ENCODE measurements at regions of chr18 and their contacts with region 1.

Region 1: DNA sequence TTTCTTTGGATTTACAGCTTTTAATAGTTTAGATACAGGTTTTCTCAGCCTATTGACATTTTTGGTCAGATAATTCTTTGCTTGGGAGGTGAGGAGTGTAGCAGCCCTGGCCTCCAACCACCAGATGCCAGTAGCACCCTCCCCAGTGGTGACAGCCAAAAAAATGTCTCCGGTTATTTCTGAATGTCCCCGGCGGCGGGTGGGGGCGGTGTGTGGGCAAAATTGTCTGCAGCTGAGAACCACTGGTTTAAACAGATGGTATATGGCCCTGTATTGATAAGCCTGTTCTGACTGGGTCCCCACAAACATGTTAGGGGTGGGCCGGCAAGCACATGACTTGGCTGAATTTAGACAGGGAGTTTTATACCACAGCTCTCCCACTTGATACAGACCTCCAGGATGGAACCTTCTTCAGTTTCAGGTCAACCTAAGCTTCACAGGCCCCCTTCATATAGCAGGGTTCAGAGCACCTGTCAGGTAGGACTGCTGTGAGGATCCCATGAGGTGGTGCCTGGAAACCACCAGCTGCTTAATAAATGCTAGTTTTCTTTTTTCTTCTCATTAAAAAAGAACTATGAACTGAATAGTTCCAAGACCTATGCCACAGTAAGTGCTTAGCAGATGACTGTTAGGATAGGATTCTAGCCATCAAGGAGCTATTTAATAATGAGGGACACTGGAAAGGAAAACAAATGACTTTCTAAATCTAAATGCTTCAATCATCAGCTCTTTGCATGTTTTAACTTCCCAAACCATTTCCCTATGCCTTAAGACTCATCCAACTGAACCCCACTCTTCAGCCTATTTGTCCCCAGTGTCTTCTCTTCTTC is 18.1 kb downstream of the LPIN2 start:
- DNase-seq: peak; percentile 69
- H3K4me3 Mint-ChIP-seq: peak overlapping the region; percentile 43
- H3K27ac Mint-ChIP-seq: peak overlapping the region; percentile 89
- H3K4me1 Mint-ChIP-seq: peaks cover 73% of the 10 kb centered on the region
- H3K27me3 Mint-ChIP-seq: no peaks in the 10 kb centered on the region

Region 2: DNA sequence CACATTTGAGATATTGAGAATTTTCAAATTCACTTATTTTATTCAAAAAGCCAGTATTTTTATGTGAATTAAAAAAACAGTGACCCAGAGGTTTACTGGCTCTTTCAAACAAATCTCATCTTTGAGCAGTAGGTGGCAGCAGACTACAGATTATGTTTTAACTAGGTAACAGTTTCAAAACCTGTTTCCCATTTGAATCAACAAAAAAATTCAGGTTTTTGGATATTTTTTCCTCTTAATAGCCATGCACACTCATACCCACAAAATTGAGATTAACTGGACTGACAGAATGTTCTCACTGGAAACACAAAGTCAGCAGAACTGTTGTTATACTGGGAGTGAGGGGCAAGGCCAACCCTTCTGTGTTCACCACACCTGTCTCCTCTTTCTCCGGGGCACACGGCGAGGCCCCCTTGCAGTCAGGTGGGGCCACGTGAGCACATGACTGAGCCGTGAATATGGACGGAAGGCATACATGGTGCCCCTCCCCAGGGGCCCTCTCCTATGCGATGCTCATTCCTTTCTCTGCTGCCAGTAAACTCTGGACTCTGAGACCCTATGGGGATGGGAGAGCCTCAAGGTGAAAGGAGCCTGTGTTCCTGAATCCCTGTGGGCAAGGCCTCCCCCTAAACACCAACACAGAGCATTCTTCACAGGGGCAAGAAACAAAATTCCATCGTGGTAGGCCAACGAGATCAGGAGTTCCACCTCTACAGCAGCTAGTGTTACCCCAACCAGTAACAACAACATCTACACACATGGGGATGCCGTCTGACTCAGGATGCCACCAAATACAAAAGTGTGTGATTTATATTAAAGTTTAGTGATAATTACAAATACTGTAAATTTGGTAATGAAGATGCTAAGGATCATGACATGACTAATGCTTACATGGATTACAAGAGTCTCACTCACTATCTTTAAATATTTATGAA is 62.3 kb before region 1 on chr18:
- intact Hi-C with region 1: loop called (anchors 2 kb)
- DNase-seq: no peak
- H3K4me3 Mint-ChIP-seq: peak overlapping the region; percentile 43
- H3K27ac Mint-ChIP-seq: peak overlapping the region; percentile 89
- H3K4me1 Mint-ChIP-seq: peaks cover 32% of the 10 kb centered on the region
- H3K27me3 Mint-ChIP-seq: no peaks in the 10 kb centered on the region

Region 3: GRCh38 chr18:2978646-2979045 is 16.2 kb before region 1 on chr18:
- intact Hi-C with region 1: loop called (anchors 1 kb)
- DNase-seq: no peak
- H3K4me3 Mint-ChIP-seq: peak overlapping the region; percentile 75
- H3K27ac Mint-ChIP-seq: peak overlapping the region; percentile 91
- H3K4me1 Mint-ChIP-seq: peaks cover 74% of the 10 kb centered on the region
- H3K27me3 Mint-ChIP-seq: no peaks in the 10 kb centered on the region

Region 4: DNA sequence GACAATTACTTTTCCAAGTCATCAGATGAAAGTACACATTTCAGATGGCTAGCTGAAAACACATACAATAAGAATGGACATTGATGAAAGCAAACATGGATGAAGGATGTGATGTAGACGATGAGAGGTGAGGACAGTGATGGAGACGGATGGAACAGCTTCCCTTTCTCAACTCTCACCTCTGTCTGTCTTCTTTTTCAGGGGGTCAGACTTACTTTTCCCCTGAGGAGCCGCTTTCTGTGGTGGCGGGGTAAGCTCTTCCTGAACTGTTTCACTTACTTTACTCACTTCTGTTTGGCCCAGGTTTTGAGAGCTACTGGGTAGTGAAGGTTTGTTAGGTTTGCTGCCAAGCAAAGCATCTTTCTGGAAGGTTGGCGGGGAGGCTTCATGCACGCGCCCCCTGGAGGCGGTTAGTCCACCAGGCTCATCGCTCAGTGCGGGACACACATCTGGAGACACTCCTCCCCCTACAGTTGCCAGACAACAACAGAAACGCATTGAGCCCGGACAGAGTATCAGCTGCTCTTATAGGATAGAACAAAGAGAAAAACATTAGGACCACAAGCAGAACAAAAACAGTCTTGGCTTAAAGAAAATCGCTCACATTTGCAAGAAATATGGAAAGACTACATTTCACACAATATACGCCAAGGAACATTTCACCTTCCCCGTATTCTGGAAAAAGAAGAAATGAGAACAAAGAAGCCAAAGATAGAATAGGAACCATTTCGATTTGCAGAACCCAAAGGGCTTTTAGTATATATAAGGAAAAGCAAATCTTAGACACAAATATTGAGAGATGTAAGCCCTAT is 134.4 kb after region 1 on chr18:
- intact Hi-C with region 1: loop called (anchors 1 kb)
- DNase-seq: peak; percentile 72
- H3K4me3 Mint-ChIP-seq: no peak overlapping the region
- H3K27ac Mint-ChIP-seq: no peak overlapping the region
- H3K4me1 Mint-ChIP-seq: peaks cover 6% of the 10 kb centered on the region
- H3K27me3 Mint-ChIP-seq: no peaks in the 10 kb centered on the region

Measured in activated T-helper 2 cell treated with anti-CD3 and anti-CD28 coated beads, Interferon-gamma antibody, Interleukin-2, Interleukin-4, amounts not matched to agents 10 μg/mL and 5 μg/mL and 100 μg/mL, durations not matched to agents 14 hours and 24 hours and 36 hours (primary cell).